ENCODE measurements at regions of chr6 and their contacts with region 1.

Region 1: GRCh38 chr6:3929281-3929798 is 80.2 kb downstream of the FAM50B start:
- DNase-seq: peak; percentile 39
- ATAC-seq: peak in 1 of 2 donors; percentile 17

Region 2: GRCh38 chr6:3742426-3743344 is 186.7 kb before region 1 on chr6:
- intact Hi-C with region 1: loop called in 1 of 2 experiments (anchors 5 kb)
- DNase-seq: peak; percentile 84
- ATAC-seq: peak; percentile 78 to 85

Region 3: GRCh38 chr6:3751730-3752542 is 177.4 kb before region 1 on chr6:
- intact Hi-C with region 1: loop called in 1 of 2 experiments (anchors 2 kb)
- DNase-seq: peak; percentile 94
- ATAC-seq: peak; percentile 78 to 84

Region 4: DNA sequence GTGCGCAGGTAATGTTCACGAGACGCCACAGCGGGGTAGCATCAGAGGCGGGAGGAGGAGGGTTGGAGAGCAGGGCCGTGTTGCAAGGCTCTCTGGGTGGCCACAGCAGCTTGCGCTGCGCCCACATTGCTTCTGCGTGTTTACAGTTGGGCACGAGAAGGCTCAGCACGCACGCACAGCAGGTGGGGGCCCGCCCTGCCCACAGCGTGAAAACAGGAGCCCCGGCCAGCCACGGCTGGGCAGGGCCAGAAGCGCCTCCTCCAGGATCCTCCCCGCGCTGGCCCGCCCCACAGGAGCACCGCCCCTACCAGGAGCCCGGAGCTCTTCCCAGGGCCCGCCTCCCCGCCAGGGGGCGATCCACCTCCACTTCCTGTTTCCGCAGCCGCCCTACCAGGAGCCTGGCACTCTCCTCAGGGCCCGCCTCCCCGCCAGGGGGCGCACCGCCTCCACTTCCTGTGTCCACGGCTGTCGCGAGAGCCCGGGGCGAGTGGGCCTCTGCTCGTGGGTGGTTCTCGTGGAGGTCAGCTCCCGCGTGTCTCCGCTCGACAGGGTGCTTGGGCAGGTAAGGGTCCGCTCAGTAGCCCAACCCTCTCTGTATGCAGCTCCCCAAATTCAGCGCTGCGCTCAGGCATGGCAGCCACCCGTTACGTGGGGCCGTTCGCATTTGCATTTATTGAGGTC is 80.3 kb before region 1 on chr6 and contains the start of gene FAM50B:
- intact Hi-C with region 1: loop called in 1 of 2 experiments (anchors 2 kb)
- DNase-seq: peak; percentile 92
- ATAC-seq: peak; percentile 95 to 98
- total RNA-seq, gene FAM50B: 13.4 to 18.8 TPM

Region 5: GRCh38 chr6:3887150-3887700 is 42.1 kb before region 1 on chr6:
- intact Hi-C with region 1: loop called in 1 of 2 experiments (anchors 1 kb)
- DNase-seq: no peak
- ATAC-seq: peak; percentile 21 to 35

Region 6: GRCh38 chr6:3977875-3978711 is 48.8 kb after region 1 on chr6:
- intact Hi-C with region 1: no loop called
- DNase-seq: no peak
- ATAC-seq: peak; percentile 68 to 86

Region 7: GRCh38 chr6:4030669-4031068 is 101.3 kb after region 1 on chr6:
- intact Hi-C with region 1: no loop called
- DNase-seq: no peak
- ATAC-seq: no peak